Activated CD4-positive, alpha-beta memory T cell treated with anti-CD3 and anti-CD28 coated beads for 36 hours (primary cell): ENCODE measurements at regions of chr4 and their contacts with region 1.

Region 1: GRCh38 chr4:98658287-98659105 is at the start of gene TSPAN5:
- DNase-seq: peak; percentile 87
- H3K4me3 Mint-ChIP-seq: peak within 1 kb of the TSS; percentile 87
- H3K27ac Mint-ChIP-seq: peak within 1 kb of the TSS; percentile 79
- H3K4me1 Mint-ChIP-seq: peaks cover 78% of the 10 kb centered on the region
- H3K27me3 Mint-ChIP-seq: no peaks in the 10 kb centered on the region
- total RNA-seq, gene TSPAN5: 19.2 to 20.4 TPM

Region 2: GRCh38 chr4:98289375-98289774 is 369.1 kb before region 1 on chr4:
- CTCF ChIA-PET with region 1: no interaction called
- POLR2A ChIA-PET with region 1: no interaction called
- intact Hi-C with region 1: loop called (anchors 5 kb)
- DNase-seq: no peak
- H3K4me3 Mint-ChIP-seq: peak overlapping the region; percentile 38
- H3K27ac Mint-ChIP-seq: peak overlapping the region; percentile 13
- H3K4me1 Mint-ChIP-seq: peaks cover 51% of the 10 kb centered on the region
- H3K27me3 Mint-ChIP-seq: no peaks in the 10 kb centered on the region

Region 3: DNA sequence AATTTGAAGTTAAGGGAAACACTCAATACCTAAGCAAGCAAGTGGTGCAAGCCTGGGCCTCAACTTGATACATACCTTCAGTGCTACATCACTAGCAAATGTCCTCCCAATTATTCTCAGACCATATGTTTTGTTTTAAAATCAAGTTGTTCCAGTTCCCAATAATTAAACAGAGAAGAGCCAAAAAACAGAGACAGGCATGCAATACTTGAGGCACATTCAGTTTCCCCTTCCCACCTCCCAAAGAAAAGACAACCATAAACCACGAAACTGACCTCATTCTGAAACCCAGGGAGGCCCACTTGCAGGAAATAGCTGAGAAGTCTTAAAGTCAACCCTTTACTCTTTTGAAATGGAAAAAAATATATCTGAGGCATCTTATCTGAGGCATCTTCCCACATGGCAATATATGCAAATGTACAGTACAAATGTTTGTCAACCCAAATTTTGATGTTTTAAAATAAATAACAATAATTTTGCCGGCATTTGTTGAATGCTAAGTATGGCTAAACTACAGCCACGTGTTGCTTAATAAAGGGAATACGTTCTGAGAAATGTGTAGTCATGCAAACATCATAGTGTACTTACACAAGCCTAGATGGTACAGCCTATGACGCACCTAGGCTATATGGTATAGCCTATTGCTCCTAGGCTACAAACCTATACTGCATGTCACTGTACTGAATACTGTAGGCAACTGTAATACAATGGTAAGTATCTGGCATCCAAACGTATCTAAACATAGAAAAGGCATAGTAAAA is 147.6 kb before region 1 on chr4:
- CTCF ChIA-PET with region 1: no interaction called
- POLR2A ChIA-PET with region 1: no interaction called
- intact Hi-C with region 1: loop called (anchors 1 kb)
- DNase-seq: peak; percentile 69
- H3K4me3 Mint-ChIP-seq: no peak overlapping the region
- H3K27ac Mint-ChIP-seq: peak overlapping the region; percentile 24
- H3K4me1 Mint-ChIP-seq: peaks cover 55% of the 10 kb centered on the region
- H3K27me3 Mint-ChIP-seq: no peaks in the 10 kb centered on the region

Region 4: GRCh38 chr4:98688411-98689290 is 30.2 kb after region 1 on chr4:
- CTCF ChIA-PET with region 1: interaction called, 3 read pairs
- POLR2A ChIA-PET with region 1: interaction called, 12 read pairs
- intact Hi-C with region 1: loop called (anchors 1 kb)
- DNase-seq: peak; percentile 63
- H3K4me3 Mint-ChIP-seq: no peak overlapping the region
- H3K27ac Mint-ChIP-seq: peak overlapping the region; percentile 72
- H3K4me1 Mint-ChIP-seq: peaks cover 45% of the 10 kb centered on the region
- H3K27me3 Mint-ChIP-seq: no peaks in the 10 kb centered on the region

Region 5: DNA sequence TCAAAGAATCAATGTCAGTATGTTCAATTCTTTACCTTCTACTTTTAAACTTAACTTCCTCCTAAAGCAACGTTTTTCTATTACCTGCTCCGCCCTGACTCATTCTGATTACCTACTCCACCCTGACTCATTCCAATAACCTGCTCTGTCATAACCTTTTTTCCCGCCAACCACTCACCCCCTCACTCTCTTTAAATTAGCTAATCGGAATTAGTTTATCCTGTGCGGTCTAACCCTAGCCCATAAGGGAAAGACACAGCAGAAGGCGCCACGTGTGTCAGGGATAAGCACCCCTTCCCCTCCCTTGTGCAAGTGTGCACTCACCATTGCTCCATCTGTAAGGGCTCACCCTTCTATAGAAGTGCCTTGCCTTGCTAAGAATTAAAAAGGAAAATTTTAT is 206.1 kb after region 1 on chr4:
- CTCF ChIA-PET with region 1: interaction called, 3 read pairs
- POLR2A ChIA-PET with region 1: no interaction called
- intact Hi-C with region 1: loop called (anchors 1 kb)
- DNase-seq: peak; percentile 79
- H3K4me3 Mint-ChIP-seq: no peak overlapping the region
- H3K27ac Mint-ChIP-seq: peak overlapping the region; percentile 42
- H3K4me1 Mint-ChIP-seq: peaks cover 13% of the 10 kb centered on the region
- H3K27me3 Mint-ChIP-seq: no peaks in the 10 kb centered on the region

Region 6: DNA sequence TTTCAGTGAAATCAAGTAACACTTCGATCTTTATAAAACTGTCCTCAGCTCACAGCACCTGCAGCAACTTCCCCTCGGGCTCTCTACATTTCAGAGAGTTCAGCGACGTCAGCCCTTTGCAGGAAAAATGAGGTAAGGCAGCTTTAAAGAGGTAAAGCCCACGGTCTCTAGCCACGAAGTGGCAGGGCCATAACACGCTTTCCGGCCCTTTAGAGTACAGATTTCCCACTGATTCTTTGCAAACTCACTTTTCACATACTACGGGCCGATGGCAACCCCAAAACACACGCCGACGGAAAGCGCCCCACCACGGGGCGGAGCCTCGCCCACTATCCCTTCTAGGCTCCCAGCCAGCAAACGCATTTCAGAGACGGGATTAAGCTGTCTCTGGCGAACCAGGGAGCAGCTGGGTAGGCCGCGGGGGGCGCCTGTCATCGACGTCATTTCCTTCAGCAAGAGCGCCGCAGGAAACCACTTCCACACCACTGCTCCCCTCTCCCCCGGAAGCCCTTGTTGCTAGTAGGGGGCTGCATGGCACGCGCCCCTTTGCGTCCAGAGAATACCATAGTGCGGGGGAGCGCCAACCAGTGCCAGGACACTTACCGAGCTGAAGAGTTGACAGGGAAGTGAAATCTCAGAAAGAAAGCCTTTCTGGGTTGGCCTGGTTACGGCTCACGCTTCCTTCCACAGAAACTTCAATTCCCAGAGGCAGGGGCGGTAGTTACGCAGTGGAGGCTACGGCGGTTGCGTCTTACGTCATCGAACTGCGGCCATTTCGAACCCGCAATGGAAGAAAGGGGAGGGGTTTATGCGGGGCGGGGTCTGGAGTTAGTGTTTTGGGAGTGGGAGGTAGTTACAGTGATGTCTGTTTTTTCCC is 905.1 kb after region 1 on chr4 and contains the start of gene TRMT10A:
- CTCF ChIA-PET with region 1: no interaction called
- POLR2A ChIA-PET with region 1: no interaction called
- intact Hi-C with region 1: loop called (anchors 5 kb)
- DNase-seq: peak; percentile 98
- H3K4me3 Mint-ChIP-seq: peak within 1 kb of the TSS; percentile 93
- H3K27ac Mint-ChIP-seq: peak within 1 kb of the TSS; percentile 98
- H3K4me1 Mint-ChIP-seq: peaks cover 6% of the 10 kb centered on the region
- H3K27me3 Mint-ChIP-seq: peaks cover 7% of the 10 kb centered on the region
- total RNA-seq, gene TRMT10A: 5.6 to 8.9 TPM